ENCODE measurements at regions of chr2 and their contacts with region 1.

Region 1: DNA sequence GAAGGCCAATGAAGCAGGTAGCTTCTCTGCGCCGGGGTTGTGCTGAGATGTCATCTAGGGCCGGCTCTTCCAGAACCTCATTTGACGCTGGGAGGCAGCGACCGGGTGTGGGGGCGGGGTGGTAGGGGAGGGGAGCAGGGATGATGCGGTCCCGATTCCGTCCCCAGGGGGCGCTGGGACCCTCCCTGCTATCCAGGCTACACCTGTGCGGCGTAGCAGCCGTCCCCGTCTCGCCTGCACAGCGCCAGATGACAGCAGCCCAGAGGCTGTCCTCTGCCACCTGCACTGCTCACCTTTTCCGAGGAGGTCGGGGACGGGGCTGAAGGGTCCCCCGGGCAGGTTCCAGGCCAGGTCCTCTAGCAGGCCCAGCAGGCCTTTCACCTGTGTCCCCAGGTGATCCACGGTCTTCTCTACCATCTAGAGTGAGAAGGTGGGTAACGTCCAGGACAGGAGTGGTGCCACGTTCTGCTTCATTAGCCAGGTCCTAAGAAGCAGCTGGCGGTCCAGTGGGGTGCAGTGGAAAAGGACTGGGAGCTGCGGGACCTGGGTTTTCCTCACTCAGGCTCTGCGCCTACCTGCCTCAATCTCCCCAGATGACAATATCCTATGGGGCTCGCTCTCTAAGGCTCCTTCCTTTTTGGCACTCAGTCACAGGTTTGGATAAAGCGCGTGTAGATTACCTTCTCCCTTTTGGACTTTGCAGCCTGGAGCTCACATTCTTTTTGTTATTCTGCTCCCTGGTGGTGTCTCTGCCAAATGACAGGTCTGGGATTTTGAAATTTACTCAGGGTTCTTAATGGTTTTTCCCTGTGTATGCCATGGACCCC is 56.0 kb upstream of the RAB6C start:
- DNase-seq: no peak
- H3K4me3 ChIP-seq: no peak overlapping the region
- H3K27ac ChIP-seq: no peak overlapping the region
- H3K4me1 ChIP-seq: peaks cover 0 to 8% (median 3%) of the 10 kb centered on the region in 4 donors
- H3K27me3 ChIP-seq: peaks cover 0 to 17% of the 10 kb centered on the region in 2 donors
- CTCF ChIP-seq: peak; percentile 32 to 41

Region 2: GRCh38 chr2:129859175-129859574 is 64.3 kb before region 1 on chr2:
- intact Hi-C with region 1: no loop called
- DNase-seq: no peak
- H3K4me3 ChIP-seq: no peak overlapping the region
- H3K27ac ChIP-seq: no peak overlapping the region
- H3K4me1 ChIP-seq: no peaks in the 10 kb centered on the region
- H3K27me3 ChIP-seq: peaks cover 0 to 5% of the 10 kb centered on the region in 2 donors
- CTCF ChIP-seq: no peak

Region 3: DNA sequence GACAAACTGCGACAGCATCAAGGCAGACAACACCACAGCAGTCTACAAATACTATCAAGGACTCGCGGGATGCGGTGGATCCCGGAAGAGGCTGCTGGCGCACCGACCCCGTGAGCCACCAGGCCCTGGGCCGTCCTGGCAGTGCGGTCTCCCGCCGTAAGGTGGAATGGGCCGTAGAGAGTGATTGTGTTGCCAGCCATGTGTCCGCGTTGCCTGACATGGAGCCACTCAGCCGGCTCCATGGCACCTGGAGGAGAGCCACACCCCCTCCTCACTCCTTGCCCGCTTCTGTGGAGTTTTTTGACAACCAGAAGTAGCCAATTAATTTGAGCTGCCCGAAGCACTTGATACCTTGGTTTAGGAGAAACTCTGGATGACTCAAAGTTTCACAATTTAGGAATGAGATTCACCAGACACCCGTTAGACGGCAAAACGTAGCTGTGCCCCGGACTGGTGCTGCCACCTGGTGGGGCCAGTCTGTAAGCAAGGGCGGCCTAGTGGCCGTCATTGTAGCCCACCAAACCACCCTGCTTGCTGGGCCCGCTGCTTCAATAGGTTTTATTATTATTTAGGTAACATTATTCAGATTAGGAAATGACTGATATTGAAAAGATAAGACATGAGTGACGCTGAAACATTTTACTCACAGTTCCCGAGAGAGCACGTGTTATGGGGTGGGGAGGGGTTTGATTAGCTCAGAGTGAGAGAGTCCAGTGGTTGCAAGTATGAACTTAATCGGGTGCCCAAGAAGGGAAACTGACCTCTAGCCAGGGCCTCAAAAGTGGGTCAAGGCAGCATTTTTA is 409.0 kb after region 1 on chr2:
- intact Hi-C with region 1: loop called (anchors 10 kb)
- DNase-seq: no peak
- H3K4me3 ChIP-seq: no peak overlapping the region
- H3K27ac ChIP-seq: no peak overlapping the region
- H3K4me1 ChIP-seq: peaks cover 0 to 8% (median 1%) of the 10 kb centered on the region in 4 donors
- H3K27me3 ChIP-seq: peaks cover 0 to 9% of the 10 kb centered on the region in 2 donors
- CTCF ChIP-seq: peak; percentile 71 to 86

Region 4: GRCh38 chr2:131322209-131322608 is 1398.7 kb after region 1 on chr2:
- intact Hi-C with region 1: no loop called
- DNase-seq: no peak
- H3K4me3 ChIP-seq: no peak overlapping the region
- H3K27ac ChIP-seq: no peak overlapping the region
- H3K4me1 ChIP-seq: no peaks in the 10 kb centered on the region
- H3K27me3 ChIP-seq: no peaks in the 10 kb centered on the region
- CTCF ChIP-seq: no peak

Measured in tibial artery (tissue), 4 donors.